Psoas muscle (tissue), 8 donors: ENCODE measurements at regions of chr15 and their contacts with region 1.

Region 1: DNA sequence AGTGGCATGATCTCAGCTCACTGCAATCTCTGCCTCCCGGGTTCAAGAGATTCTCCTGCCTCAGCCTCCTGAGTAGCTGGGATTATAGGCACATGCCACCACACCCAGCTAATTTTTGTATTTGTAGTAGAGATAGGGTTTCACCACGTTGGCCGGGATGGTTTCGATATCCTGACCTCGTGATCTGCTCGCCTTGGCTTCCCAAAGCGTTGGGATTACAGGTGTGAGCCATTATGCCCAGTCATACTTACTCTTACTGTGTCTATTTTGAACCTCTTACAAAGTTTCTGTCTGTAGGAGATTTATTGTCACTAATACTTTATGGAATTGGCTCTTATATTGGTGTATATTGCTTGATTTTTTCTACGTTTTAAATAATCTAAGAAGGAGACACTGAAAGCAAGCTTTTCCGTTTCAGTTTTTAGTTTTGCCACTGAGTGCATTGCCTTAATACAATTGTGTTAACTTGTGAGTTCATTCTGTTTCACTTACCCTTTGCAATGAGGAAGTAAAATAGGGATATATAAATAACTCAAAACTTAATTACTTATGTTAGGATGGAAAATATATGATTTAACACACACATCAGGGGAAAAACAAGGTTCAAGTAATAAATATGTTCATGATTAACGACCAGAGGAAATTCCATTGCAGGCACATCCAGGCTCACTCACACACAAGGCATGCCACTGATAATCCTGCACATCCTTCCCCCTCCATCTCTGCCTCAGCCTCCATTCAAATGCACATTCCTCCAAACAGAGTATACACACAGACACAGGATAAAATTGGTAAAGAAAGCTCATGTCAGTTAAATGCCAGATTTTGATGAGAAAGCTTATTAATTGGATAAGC is 279.3 kb upstream of the RASGRP1 start:
- DNase-seq: no peak
- ATAC-seq: no peak
- H3K4me3 ChIP-seq: no peak overlapping the region
- H3K27ac ChIP-seq: no peak overlapping the region
- H3K4me1 ChIP-seq: no peaks in the 10 kb centered on the region
- H3K27me3 ChIP-seq: no peaks in the 10 kb centered on the region
- CTCF ChIP-seq: no peak

Region 2: GRCh38 chr15:37262922-37263608 is 1580.9 kb before region 1 on chr15:
- intact Hi-C with region 1: loop called in 1 of 2 experiments (anchors 10 kb)
- DNase-seq: no peak
- ATAC-seq: no peak
- H3K4me3 ChIP-seq: no peak overlapping the region
- H3K27ac ChIP-seq: no peak overlapping the region
- H3K4me1 ChIP-seq: no peaks in the 10 kb centered on the region
- H3K27me3 ChIP-seq: no peaks in the 10 kb centered on the region
- CTCF ChIP-seq: no peak

Region 3: DNA sequence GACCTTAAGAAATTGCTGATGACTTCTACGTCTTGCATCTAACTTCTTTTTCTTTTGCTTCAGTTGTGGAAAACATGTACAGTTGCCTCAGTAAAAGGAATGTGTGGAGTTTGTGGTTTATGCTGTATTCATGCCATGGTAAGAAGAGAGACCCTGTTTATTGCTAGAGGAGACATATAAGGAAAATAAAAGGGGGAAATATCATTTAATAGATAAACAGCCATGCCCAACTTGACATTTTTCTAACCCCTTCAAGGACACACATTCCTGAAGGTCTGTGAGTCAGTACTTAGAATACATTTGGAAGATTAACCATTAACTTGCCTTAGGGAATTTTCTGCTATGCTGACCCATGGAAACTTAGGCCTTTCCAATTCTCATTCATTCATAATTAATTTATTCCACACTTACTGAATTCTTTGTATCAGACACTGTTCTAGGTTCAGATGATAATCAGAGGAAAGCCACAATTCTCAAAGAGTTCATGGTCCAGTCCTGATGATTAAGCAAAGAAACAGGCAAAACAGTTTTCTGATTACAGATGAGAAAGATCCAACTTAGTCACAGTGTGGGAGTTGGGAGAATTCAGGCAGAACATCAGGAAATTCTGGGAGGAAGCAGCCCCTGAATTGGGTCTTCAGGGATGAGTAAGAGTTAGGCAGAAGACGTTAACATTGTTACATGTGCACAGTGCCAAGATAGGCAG is 50.4 kb after region 1 on chr15:
- intact Hi-C with region 1: no loop called
- DNase-seq: no peak
- ATAC-seq: no peak
- H3K4me3 ChIP-seq: no peak overlapping the region
- H3K27ac ChIP-seq: no peak overlapping the region
- H3K4me1 ChIP-seq: no peaks in the 10 kb centered on the region
- H3K27me3 ChIP-seq: no peaks in the 10 kb centered on the region
- CTCF ChIP-seq: no peak

Region 4: DNA sequence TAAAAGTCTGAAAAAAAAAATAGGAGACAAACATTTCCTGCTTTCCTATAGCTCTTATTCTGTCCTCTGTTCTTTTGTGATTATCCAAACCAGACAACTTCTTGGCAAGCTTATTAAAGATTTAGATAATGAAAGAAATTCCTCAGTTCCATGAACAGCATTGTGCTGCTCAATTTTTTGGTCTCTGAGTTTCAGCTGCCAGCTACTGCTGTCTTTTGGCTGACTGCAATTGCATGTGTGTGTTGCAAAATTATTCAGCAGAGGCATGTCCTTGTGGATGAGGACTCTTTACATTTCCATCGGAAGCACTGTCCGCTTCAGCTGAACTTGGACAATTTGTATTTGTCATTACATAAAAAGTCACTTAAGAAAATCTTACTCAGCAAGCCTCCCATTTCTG is 118.0 kb after region 1 on chr15:
- intact Hi-C with region 1: no loop called
- DNase-seq: no peak
- ATAC-seq: no peak
- H3K4me3 ChIP-seq: no peak overlapping the region
- H3K27ac ChIP-seq: no peak overlapping the region
- H3K4me1 ChIP-seq: no peaks in the 10 kb centered on the region
- H3K27me3 ChIP-seq: no peaks in the 10 kb centered on the region
- CTCF ChIP-seq: no peak